B cell (primary cell): ENCODE measurements at regions of chr12 and their contacts with region 1.

Region 1: DNA sequence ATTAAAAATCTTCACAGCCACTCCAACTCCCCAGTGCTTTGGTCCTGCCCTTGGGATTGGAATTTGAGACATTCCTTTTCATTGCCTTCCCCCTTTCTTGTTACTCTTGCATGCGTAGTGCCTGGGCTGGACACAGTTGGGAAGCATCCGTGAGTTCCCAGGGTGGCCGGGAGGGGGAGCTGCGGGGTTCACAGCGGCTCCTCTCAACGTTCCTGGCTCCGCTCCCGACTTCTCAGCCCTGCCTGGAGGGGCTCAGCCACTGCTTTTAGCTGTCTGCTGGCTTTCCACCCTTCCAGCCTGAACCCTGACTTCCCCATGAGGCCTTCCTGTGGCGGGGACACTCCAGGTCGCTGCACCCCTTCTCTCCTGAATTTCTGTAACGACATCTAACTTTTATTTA is 3.2 kb downstream of the TEX52 start:
- DNase-seq: peak; percentile 44
- ATAC-seq: no peak
- H3K4me3 ChIP-seq: no peak overlapping the region
- H3K4me3 Mint-ChIP-seq: no peak overlapping the region
- H3K27ac ChIP-seq: no peak overlapping the region
- H3K27ac Mint-ChIP-seq: no peak overlapping the region
- H3K4me1 ChIP-seq: no peaks in the 10 kb centered on the region
- H3K4me1 Mint-ChIP-seq: no peaks in the 10 kb centered on the region
- H3K27me3 ChIP-seq: no peaks in the 10 kb centered on the region
- H3K27me3 Mint-ChIP-seq: no peaks in the 10 kb centered on the region
- CTCF ChIP-seq: peak; percentile 56

Region 2: DNA sequence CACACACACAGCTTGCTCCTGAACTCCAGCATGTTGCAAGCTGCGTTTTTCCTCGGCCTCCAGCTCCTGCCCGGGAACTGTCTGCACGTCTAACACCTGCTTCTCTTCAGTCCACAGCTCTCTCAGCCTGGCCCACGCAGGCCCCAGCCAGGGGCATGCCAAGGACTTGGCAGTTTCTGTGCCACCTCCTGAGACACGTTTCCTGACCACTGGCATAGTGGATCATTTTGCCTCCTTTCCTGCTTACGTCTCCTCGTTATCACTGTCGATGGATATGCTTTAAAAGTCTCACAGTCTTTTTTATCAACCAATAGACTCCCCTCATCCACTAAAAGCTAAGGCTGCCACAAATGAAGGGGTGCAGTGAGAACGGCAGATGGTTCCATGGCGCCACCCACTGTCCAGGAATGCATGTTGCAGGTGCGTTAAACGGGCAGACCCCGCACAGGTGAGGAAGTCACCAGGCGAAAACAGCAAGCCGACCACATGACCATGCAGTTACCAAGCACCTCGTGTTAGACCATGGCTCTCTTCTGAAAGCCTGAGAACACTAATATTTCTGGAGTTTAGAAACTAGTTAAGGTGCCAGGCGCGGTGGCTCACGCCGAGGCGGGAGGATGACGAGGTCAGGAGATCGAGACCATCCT is 90.9 kb after region 1 on chr12:
- CTCF ChIA-PET with region 1: interaction called, 22 read pairs
- POLR2A ChIA-PET with region 1: no interaction called
- intact Hi-C with region 1: no loop called
- DNase-seq: peak; percentile 58
- ATAC-seq: no peak
- H3K4me3 ChIP-seq: no peak overlapping the region
- H3K4me3 Mint-ChIP-seq: no peak overlapping the region
- H3K27ac ChIP-seq: no peak overlapping the region
- H3K27ac Mint-ChIP-seq: no peak overlapping the region
- H3K4me1 ChIP-seq: peaks cover 0 to 5% of the 10 kb centered on the region in 2 donors
- H3K4me1 Mint-ChIP-seq: peaks cover 4% of the 10 kb centered on the region
- H3K27me3 ChIP-seq: no peaks in the 10 kb centered on the region
- H3K27me3 Mint-ChIP-seq: peaks cover 6% of the 10 kb centered on the region
- CTCF ChIP-seq: peak; percentile 67

Region 3: GRCh38 chr12:3034067-3034750 is 180.6 kb after region 1 on chr12:
- CTCF ChIA-PET with region 1: no interaction called
- POLR2A ChIA-PET with region 1: no interaction called
- intact Hi-C with region 1: loop called (anchors 10 kb)
- DNase-seq: peak; percentile 39
- ATAC-seq: peak; percentile 57
- H3K4me3 ChIP-seq: no peak overlapping the region
- H3K4me3 Mint-ChIP-seq: no peak overlapping the region
- H3K27ac ChIP-seq: no peak overlapping the region
- H3K27ac Mint-ChIP-seq: no peak overlapping the region
- H3K4me1 ChIP-seq: no peaks in the 10 kb centered on the region
- H3K4me1 Mint-ChIP-seq: no peaks in the 10 kb centered on the region
- H3K27me3 ChIP-seq: no peaks in the 10 kb centered on the region
- H3K27me3 Mint-ChIP-seq: peaks cover 12% of the 10 kb centered on the region
- CTCF ChIP-seq: peak; percentile 34

Region 4: GRCh38 chr12:3041558-3042164 is 188.0 kb after region 1 on chr12:
- CTCF ChIA-PET with region 1: interaction called, 10 read pairs
- POLR2A ChIA-PET with region 1: no interaction called
- intact Hi-C with region 1: loop called (anchors 10 kb)
- DNase-seq: peak; percentile 70
- ATAC-seq: peak; percentile 52
- H3K4me3 ChIP-seq: no peak overlapping the region
- H3K4me3 Mint-ChIP-seq: peak overlapping the region; percentile 44
- H3K27ac ChIP-seq: no peak overlapping the region
- H3K27ac Mint-ChIP-seq: peak overlapping the region; percentile 53
- H3K4me1 ChIP-seq: peaks cover 17% of the 10 kb centered on the region in 2 donors
- H3K4me1 Mint-ChIP-seq: peaks cover 30% of the 10 kb centered on the region
- H3K27me3 ChIP-seq: peaks cover 0 to 24% (median 5%) of the 10 kb centered on the region in 4 experiments
- H3K27me3 Mint-ChIP-seq: peaks cover 36% of the 10 kb centered on the region
- CTCF ChIP-seq: peak; percentile 56

Region 5: GRCh38 chr12:3158851-3159465 is 305.3 kb after region 1 on chr12:
- CTCF ChIA-PET with region 1: no interaction called
- POLR2A ChIA-PET with region 1: no interaction called
- intact Hi-C with region 1: no loop called
- DNase-seq: no peak
- ATAC-seq: no peak
- H3K4me3 ChIP-seq: no peak overlapping the region
- H3K4me3 Mint-ChIP-seq: no peak overlapping the region
- H3K27ac ChIP-seq: no peak overlapping the region
- H3K27ac Mint-ChIP-seq: no peak overlapping the region
- H3K4me1 ChIP-seq: no peaks in the 10 kb centered on the region
- H3K4me1 Mint-ChIP-seq: no peaks in the 10 kb centered on the region
- H3K27me3 ChIP-seq: peaks cover 0 to 3% (median 0%) of the 10 kb centered on the region in 4 experiments
- H3K27me3 Mint-ChIP-seq: peaks cover 17% of the 10 kb centered on the region
- CTCF ChIP-seq: no peak